Activated CD4-positive, alpha-beta memory T cell treated with anti-CD3 and anti-CD28 coated beads for 36 hours (primary cell): ENCODE measurements at regions of chr13 and their contacts with region 1.

Region 1: GRCh38 chr13:41352935-41353840 is 42.1 kb downstream of the NAA16 start:
- DNase-seq: peak; percentile 73
- H3K4me3 Mint-ChIP-seq: no peak overlapping the region
- H3K27ac Mint-ChIP-seq: peak overlapping the region; percentile 73
- H3K4me1 Mint-ChIP-seq: peaks cover 53% of the 10 kb centered on the region
- H3K27me3 Mint-ChIP-seq: no peaks in the 10 kb centered on the region

Region 2: GRCh38 chr13:41310963-41311606 is 42.1 kb before region 1 on chr13 and contains the start of gene NAA16:
- CTCF ChIA-PET with region 1: interaction called, 3 read pairs
- POLR2A ChIA-PET with region 1: no interaction called
- intact Hi-C with region 1: loop called (anchors 2 kb)
- DNase-seq: peak; percentile 97
- H3K4me3 Mint-ChIP-seq: peak within 1 kb of the TSS; percentile 93
- H3K27ac Mint-ChIP-seq: peak within 1 kb of the TSS; percentile 92
- H3K4me1 Mint-ChIP-seq: peaks cover 34% of the 10 kb centered on the region
- H3K27me3 Mint-ChIP-seq: no peaks in the 10 kb centered on the region
- total RNA-seq, gene NAA16: 19.2 to 23.2 TPM

Region 3: GRCh38 chr13:41465241-41465847 is 112.2 kb after region 1 on chr13:
- CTCF ChIA-PET with region 1: interaction called, 3 read pairs
- POLR2A ChIA-PET with region 1: interaction called, 3 read pairs
- intact Hi-C with region 1: loop called (anchors 1 kb)
- DNase-seq: peak; percentile 96
- H3K4me3 Mint-ChIP-seq: peak overlapping the region; percentile 66
- H3K27ac Mint-ChIP-seq: peak overlapping the region; percentile 97
- H3K4me1 Mint-ChIP-seq: peaks cover 92% of the 10 kb centered on the region
- H3K27me3 Mint-ChIP-seq: no peaks in the 10 kb centered on the region

Region 4: GRCh38 chr13:41554626-41555386 is 201.6 kb after region 1 on chr13:
- CTCF ChIA-PET with region 1: no interaction called
- POLR2A ChIA-PET with region 1: no interaction called
- intact Hi-C with region 1: loop called (anchors 1 kb)
- DNase-seq: peak; percentile 77
- H3K4me3 Mint-ChIP-seq: no peak overlapping the region
- H3K27ac Mint-ChIP-seq: peak overlapping the region; percentile 9
- H3K4me1 Mint-ChIP-seq: peaks cover 21% of the 10 kb centered on the region
- H3K27me3 Mint-ChIP-seq: peaks cover 2% of the 10 kb centered on the region

Region 5: DNA sequence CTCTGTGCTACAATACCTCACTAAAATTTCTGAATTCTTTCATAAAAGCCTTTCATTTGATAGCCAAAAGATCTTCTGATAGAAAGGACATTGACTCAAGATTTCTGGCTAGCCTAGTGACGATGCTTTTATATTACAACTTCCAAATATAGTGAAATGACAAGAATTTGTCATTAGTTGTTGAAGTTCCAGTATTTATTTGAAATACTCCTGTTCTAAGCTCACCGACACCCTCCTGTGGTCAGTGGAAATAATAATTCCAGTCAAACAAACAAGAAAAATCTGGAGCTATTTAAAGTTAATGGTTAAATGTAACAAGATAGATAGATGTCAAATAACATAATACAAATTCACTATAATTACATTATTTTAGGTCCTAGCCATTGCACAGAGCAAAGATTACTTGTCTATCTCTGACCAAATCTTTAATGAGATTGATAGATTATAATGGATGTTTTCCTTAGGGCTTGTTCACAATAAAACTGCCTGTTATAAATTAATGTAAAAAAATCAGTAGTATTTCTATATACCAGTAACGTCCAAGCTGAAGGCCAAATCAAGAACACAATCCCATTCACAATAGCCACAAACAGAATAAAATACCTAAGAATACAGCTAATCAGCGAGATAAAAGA is 299.7 kb after region 1 on chr13:
- CTCF ChIA-PET with region 1: interaction called, 3 read pairs
- POLR2A ChIA-PET with region 1: no interaction called
- intact Hi-C with region 1: loop called (anchors 2 kb)
- DNase-seq: peak; percentile 33
- H3K4me3 Mint-ChIP-seq: no peak overlapping the region
- H3K27ac Mint-ChIP-seq: no peak overlapping the region
- H3K4me1 Mint-ChIP-seq: peaks cover 16% of the 10 kb centered on the region
- H3K27me3 Mint-ChIP-seq: no peaks in the 10 kb centered on the region

Region 6: GRCh38 chr13:42048682-42049453 is 695.7 kb after region 1 on chr13:
- CTCF ChIA-PET with region 1: no interaction called
- POLR2A ChIA-PET with region 1: no interaction called
- intact Hi-C with region 1: loop called (anchors 5 kb)
- DNase-seq: peak; percentile 75
- H3K4me3 Mint-ChIP-seq: peak overlapping the region; percentile 83
- H3K27ac Mint-ChIP-seq: peak overlapping the region; percentile 67
- H3K4me1 Mint-ChIP-seq: peaks cover 12% of the 10 kb centered on the region
- H3K27me3 Mint-ChIP-seq: no peaks in the 10 kb centered on the region

Region 7: GRCh38 chr13:42110410-42111155 is 757.4 kb after region 1 on chr13:
- CTCF ChIA-PET with region 1: no interaction called
- POLR2A ChIA-PET with region 1: no interaction called
- intact Hi-C with region 1: loop called (anchors 2 kb)
- DNase-seq: no peak
- H3K4me3 Mint-ChIP-seq: no peak overlapping the region
- H3K27ac Mint-ChIP-seq: no peak overlapping the region
- H3K4me1 Mint-ChIP-seq: peaks cover 6% of the 10 kb centered on the region
- H3K27me3 Mint-ChIP-seq: no peaks in the 10 kb centered on the region